MCF 10A (cell line): ENCODE measurements at regions of chr11 and their contacts with region 1.

Region 1: GRCh38 chr11:117426269-117426685 is 98.6 kb downstream of the CEP164 start:
- DNase-seq: peak; percentile 63
- H3K4me3 Mint-ChIP-seq: no peak overlapping the region
- H3K27ac Mint-ChIP-seq: no peak overlapping the region
- H3K4me1 Mint-ChIP-seq: no peaks in the 10 kb centered on the region
- H3K27me3 Mint-ChIP-seq: peaks cover 32% of the 10 kb centered on the region
- CTCF ChIP-seq: peak; percentile 98

Region 2: DNA sequence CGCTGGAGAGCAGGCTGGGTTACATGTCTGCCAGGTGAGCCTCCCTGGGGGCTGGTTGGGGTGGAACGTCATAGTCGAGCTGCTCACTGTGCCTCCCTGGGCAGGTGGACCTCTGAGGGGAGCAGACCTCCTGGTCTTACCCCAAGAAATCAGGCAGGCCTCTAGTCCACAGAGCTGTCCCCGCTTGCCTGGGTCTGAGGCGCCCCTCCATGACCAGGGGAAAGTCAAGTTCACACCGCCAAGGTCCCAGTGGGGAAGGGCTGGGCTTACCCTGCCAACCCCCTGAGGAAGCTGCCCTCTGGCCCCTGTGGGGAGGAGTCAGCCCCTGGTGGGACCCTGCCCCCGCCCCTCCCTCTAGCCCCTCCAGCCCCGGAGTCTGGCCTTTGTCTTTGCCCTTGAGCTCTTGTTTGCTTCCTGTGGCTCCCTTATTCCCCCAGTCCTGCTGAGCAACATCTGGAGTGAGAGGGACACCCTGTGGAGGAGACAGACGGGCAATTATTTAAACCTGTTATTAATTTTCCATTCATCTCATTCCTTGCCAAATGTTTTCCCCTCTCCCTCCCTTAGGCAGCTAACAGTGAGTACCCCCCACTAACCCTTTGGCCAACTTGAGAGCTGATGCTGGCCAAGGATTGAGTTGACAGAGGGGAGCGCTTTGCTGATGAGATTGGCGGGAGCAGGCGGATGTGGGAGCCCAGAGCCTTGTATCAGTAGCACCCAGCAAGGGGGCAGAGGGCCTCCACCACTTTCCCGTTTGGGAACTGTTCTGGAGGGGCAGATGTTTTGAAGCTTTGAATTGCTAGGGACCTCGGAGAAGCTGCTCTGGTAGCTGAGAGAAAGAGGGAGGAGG is 15.2 kb before region 1 on chr11:
- CTCF ChIA-PET with region 1: interaction called, 42 read pairs
- POLR2A ChIA-PET with region 1: no interaction called
- intact Hi-C with region 1: no loop called
- DNase-seq: no peak
- H3K4me3 Mint-ChIP-seq: no peak overlapping the region
- H3K27ac Mint-ChIP-seq: no peak overlapping the region
- H3K4me1 Mint-ChIP-seq: no peaks in the 10 kb centered on the region
- H3K27me3 Mint-ChIP-seq: no peaks in the 10 kb centered on the region
- CTCF ChIP-seq: no peak

Region 3: DNA sequence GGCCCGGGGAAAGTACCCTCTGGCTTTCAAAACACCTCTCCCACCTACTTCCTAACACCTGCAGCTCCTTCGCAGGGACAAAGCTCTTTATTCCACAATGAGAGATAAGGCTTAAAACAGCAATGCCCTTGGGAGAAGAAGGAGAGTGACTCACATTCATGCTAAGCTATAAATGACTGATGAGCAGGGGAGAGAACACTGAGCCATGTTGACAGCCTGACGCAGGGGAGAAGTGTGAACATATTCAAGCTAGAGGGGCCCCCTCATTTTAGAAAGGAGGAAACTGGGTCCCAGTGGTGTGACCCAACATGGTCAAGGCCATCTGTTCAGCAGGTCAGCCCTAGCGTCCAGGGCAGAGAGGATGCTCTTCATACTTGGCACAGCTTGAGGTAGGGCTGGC is 199.0 kb after region 1 on chr11:
- CTCF ChIA-PET with region 1: interaction called, 11 read pairs
- POLR2A ChIA-PET with region 1: no interaction called
- intact Hi-C with region 1: no loop called
- DNase-seq: no peak
- H3K4me3 Mint-ChIP-seq: no peak overlapping the region
- H3K27ac Mint-ChIP-seq: no peak overlapping the region
- H3K4me1 Mint-ChIP-seq: no peaks in the 10 kb centered on the region
- H3K27me3 Mint-ChIP-seq: peaks cover 60% of the 10 kb centered on the region
- CTCF ChIP-seq: no peak

Region 4: GRCh38 chr11:117807482-117808327 is 381.4 kb after region 1 on chr11:
- CTCF ChIA-PET with region 1: interaction called, 62 read pairs
- POLR2A ChIA-PET with region 1: no interaction called
- intact Hi-C with region 1: loop called (anchors 2 kb)
- DNase-seq: peak; percentile 59
- H3K4me3 Mint-ChIP-seq: no peak overlapping the region
- H3K27ac Mint-ChIP-seq: no peak overlapping the region
- H3K4me1 Mint-ChIP-seq: no peaks in the 10 kb centered on the region
- H3K27me3 Mint-ChIP-seq: peaks cover 32% of the 10 kb centered on the region
- CTCF ChIP-seq: peak; percentile 87

Region 5: GRCh38 chr11:118051611-118052461 is 625.6 kb after region 1 on chr11:
- CTCF ChIA-PET with region 1: interaction called, 11 read pairs
- POLR2A ChIA-PET with region 1: no interaction called
- intact Hi-C with region 1: loop called (anchors 1 kb)
- DNase-seq: no peak
- H3K4me3 Mint-ChIP-seq: no peak overlapping the region
- H3K27ac Mint-ChIP-seq: no peak overlapping the region
- H3K4me1 Mint-ChIP-seq: no peaks in the 10 kb centered on the region
- H3K27me3 Mint-ChIP-seq: peaks cover 30% of the 10 kb centered on the region
- CTCF ChIP-seq: no peak

Region 6: DNA sequence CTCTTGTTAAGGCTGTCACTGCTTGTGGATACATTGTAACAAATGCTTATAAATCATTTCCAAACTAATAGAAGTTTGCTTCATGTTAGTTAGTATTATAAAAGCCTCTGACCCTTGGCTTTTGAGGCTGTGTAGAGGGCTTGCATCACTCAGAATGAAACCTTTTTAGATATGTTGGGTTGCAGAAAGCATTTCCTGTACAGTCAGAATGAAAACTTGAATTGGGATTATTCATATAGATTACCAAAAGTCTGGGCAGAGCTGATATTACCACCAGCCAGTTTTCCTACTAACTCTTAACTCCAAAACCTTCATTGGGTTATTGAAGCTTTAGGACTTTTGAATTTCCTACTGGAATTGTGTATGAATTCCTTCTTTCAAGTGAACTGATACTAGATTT is 1022.0 kb after region 1 on chr11:
- CTCF ChIA-PET with region 1: no interaction called
- POLR2A ChIA-PET with region 1: no interaction called
- intact Hi-C with region 1: no loop called
- DNase-seq: no peak
- H3K4me3 Mint-ChIP-seq: no peak overlapping the region
- H3K27ac Mint-ChIP-seq: no peak overlapping the region
- H3K4me1 Mint-ChIP-seq: peaks cover 29% of the 10 kb centered on the region
- H3K27me3 Mint-ChIP-seq: no peaks in the 10 kb centered on the region
- CTCF ChIP-seq: no peak